Astrocyte of the cerebellum (primary cell): ENCODE measurements at regions of chr10 and their contacts with region 1.

Region 1: DNA sequence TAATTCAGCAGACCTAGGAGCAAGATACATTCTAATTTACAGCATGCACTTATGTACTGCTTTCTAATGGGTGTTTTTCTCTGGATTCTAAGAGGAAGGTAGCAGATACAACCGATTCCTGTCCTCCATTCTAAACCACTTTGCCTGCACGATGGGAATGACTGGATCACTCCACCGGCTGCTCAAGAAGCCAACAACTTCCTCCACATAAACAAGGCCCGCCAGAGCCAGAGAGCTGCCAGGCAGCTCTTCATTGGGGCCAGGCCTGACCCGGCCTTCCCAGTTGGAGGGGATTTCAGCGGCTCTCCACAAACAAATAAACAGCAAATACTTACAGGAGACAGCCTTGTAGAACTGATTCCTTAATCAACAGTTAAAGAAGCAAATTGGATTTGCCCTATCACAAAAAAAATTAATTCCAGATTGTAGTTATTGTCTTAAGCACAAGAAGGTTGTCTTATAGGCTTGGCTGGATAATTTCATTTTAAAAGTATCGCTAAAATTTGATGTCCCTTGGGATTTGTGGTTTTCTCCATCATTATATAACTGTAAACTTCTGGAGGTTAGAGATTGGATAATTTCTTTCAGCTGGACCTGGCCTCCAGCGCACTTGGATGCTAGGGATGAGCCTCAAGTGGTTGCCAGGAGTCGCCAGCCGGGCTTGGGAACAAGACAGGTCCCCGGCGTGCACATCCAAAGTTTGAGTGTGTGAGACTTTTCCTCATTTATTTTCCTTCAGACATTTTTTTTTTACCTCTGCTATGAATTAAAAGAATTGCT is 20.9 kb downstream of the EBF3 start:
- DNase-seq: no peak
- H3K4me3 ChIP-seq: no peak overlapping the region
- CTCF ChIP-seq: no peak

Region 2: DNA sequence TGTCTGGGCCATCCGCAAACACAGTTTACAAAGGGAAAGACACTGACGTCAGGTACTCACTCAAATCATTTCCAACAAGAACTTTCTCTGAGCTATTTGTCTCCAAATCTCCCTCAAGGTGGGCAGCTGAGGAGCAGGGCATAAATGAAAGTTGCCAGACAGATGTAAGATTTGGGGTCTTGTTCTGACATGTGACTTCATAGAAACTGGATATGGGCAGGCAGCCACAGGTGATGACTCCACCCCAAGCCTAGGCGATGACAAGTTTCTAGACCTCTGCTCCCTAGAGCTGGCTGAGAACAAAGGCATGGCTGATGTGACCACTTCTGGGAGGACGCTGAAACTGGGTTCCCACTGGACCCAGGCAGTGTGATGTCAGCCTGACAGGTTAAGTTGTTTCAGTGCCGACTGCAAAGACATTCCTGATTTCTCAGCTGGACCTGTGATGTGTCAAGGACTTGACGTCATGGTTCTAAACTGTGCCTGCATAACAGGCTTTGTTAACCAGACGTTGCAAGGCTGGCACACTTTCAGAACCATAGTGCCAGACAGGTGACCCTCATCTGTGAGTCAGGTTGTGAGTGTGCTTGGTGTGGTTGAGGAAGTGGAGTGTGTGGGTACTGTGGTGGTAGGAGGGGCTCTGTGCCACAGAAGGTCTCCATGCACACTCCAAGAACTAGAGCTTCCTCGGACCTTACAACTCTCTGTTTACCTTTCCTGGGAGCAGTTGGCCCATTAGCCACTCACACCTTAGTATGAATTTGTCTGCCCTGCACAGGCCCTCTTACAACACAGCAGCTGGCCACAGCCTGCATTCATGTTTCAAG is 60.9 kb after region 1 on chr10:
- in situ Hi-C with region 1: loop called (anchors 5 kb)
- DNase-seq: no peak
- H3K4me3 ChIP-seq: no peak overlapping the region
- CTCF ChIP-seq: no peak

Region 3: GRCh38 chr10:130606001-130606405 is 662.9 kb after region 1 on chr10:
- in situ Hi-C with region 1: no loop called
- DNase-seq: no peak
- H3K4me3 ChIP-seq: no peak overlapping the region
- CTCF ChIP-seq: no peak